Tibial artery (tissue), 4 donors: ENCODE measurements at regions of chr1 and their contacts with region 1.

Region 1: GRCh38 chr1:58971629-58972140 is 187.8 kb upstream of the JUN start:
- DNase-seq: peak; percentile 54 to 67
- H3K4me3 ChIP-seq: no peak overlapping the region
- H3K27ac ChIP-seq: no peak overlapping the region
- H3K4me1 ChIP-seq: peaks cover 0 to 16% (median 8%) of the 10 kb centered on the region in 4 donors
- H3K27me3 ChIP-seq: no peaks in the 10 kb centered on the region
- CTCF ChIP-seq: no peak

Region 2: DNA sequence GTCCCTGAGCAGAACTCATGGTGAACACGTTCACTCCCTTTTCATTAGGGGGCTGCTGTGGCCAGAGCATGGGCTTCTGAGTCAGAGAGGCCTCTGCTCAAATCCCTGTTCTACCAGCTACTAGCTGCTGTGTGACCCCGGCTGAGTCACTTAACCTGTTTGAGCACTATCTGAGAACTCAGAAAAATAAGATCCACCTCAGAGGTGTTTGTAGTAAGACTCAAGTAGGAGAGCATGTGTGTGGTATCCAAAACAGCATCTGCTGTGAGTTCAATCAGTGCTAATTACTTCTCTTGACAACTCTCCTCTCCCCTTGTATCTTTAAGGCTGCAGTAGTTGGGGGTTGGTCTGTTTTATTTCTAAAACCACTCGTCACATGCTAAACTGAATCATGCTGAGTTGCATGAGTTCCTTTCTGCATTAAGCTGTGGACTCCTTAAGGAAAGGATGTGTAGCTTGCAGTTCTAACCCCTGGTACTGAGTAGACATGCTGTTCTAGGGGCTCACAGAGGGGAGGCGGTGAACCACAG is 148.1 kb before region 1 on chr1:
- intact Hi-C with region 1: no loop called
- DNase-seq: no peak
- H3K4me3 ChIP-seq: no peak overlapping the region
- H3K27ac ChIP-seq: no peak overlapping the region
- H3K4me1 ChIP-seq: no peaks in the 10 kb centered on the region
- H3K27me3 ChIP-seq: no peaks in the 10 kb centered on the region
- CTCF ChIP-seq: no peak

Region 3: GRCh38 chr1:58950897-58951296 is 20.8 kb before region 1 on chr1:
- intact Hi-C with region 1: no loop called
- DNase-seq: no peak
- H3K4me3 ChIP-seq: no peak overlapping the region
- H3K27ac ChIP-seq: no peak overlapping the region
- H3K4me1 ChIP-seq: no peaks in the 10 kb centered on the region
- H3K27me3 ChIP-seq: no peaks in the 10 kb centered on the region
- CTCF ChIP-seq: no peak

Region 4: DNA sequence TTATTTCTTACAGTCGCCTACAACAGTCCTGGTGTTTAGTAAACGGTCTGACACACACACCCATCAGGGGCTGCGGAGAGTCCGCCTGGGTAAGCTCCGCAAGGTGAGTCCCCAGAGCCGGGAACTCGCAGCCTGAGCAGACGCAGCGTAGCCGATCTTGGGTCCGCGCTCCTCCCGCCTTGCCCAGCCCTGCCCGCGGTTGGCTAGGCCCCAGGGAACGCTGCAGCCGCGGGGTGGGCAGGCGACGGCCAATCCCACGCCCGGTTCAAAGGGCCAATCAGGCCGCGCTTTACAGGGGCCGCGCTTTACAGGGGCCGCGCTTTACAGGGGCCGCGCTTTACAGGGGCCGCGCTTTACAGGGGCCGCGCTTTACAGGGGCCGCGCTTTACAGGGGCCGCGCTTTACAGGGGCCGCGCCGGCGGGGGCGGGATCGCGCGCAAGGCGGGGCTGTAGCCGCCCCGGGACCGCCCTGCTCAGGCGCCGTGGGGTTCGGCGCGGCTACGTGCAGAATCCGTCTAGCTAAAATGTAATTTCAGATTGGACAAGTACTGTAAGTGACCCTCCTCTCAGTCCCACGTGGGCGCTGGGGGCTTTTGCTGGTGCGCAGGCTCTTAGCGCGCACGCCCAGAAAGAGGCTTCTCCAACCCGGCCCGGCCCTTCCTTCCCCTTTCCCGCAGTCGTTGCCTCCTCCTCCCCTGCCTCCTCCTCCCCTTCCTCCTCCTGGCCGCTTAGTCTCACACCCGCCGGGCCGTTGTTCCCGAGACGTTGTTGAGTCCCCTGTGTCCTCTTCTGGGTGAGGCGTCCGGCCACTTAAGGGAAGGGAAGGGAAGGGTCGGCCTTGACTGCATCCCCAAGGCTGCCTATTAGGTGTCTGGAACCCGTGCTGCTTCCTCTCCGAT is 324.9 kb after region 1 on chr1 and contains the start of gene FGGY:
- intact Hi-C with region 1: loop called (anchors 5 kb)
- DNase-seq: peak; percentile 99
- H3K4me3 ChIP-seq: peak within 1 kb of the TSS; percentile 53 to 59
- H3K27ac ChIP-seq: peak within 1 kb of the TSS; percentile 94 to 95
- H3K4me1 ChIP-seq: peaks cover 0 to 26% (median 19%) of the 10 kb centered on the region in 4 donors
- H3K27me3 ChIP-seq: no peaks in the 10 kb centered on the region
- CTCF ChIP-seq: no peak